ENCODE measurements at regions of chr2 and their contacts with region 1.

Region 1: DNA sequence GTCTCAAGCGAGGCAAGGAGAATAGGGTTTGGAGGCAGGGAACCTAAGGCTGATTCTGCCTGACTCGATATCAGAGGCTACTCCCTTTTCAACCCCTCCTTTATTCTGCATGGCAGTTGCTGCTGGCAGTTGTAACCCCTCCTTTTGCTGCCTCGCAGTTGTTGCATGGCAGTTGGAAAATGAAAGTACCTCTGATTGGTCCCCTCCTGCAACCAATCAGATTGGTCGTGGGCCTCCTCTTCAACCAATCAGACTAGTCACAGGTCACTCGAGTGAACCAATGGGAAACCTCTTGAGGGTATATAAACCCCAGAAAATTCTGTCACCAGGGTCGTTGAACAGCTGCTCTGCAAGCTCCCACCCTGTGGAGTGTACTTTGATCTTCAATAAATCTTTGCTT is 294.3 kb upstream of the SLC8A1 start:
- DNase-seq: no peak
- H3K4me3 ChIP-seq: no peak overlapping the region
- CTCF ChIP-seq: no peak

Region 2: GRCh38 chr2:40668425-40668824 is 77.7 kb before region 1 on chr2:
- in situ Hi-C with region 1: loop called (anchors 5 kb)
- DNase-seq: no peak
- H3K4me3 ChIP-seq: no peak overlapping the region
- CTCF ChIP-seq: no peak